Activated T-helper 1 cell treated with anti-CD3 and anti-CD28 coated beads, Interleukin-12 subunit alpha, Interleukin-12 subunit beta, Interleukin-2, Interleukin-4 antibody, amounts not matched to agents 30 ng/mL and 10 ng/mL and 1 ng/mL, durations not matched to agents 14 hours and 24 hours and 36 hours (primary cell): ENCODE measurements at regions of chr14 and their contacts with region 1.

Region 1: DNA sequence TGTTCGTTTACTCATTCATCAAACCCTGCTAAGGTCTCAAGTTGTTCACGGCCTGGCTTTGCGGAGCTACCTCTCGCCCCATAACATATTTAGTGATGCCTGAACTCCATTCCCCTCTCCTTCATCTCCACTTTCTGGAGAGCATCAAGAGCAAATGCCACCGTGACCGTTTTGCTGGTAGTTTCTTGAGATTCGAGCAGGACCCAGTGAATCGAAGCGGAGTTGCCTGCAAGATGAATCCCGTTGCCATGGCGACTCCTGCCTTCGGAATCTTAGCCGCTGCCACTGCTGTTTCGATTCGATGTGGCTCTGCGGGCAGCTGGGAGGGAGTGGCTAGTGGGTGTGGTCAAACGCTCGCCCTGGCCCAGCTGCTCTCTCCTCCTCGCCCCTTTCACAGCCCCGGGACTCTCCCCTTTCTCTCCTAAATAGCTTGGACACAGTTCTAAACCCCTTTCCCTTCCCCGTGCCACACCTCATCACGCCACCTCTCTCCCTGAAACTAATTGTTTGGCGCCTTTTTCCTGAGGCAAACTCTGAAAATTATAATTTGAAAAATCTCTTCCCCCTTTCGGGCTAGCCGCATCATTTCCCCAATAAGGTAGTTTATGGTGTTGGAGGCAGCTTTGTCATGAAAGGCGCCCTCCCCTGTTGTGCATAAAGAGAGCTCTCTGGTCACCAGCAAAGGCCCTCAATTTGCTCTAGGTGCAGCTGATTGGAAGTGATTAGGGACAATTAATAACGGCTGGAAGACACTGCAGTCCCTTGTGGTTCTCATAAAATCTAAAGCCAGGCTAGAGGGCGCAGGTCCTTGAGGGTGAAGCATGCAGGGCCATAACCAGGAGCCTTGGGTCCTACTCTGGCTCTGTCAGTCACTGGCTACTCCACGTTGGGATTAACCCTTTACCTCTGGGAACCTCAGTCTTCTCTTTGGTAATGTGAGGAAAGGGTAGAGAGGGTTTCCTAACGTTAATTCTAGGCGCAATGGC is 1.6 kb downstream of the DAAM1 start:
- DNase-seq: peak; percentile 73
- H3K4me3 Mint-ChIP-seq: peak overlapping the region; percentile 96
- H3K27ac Mint-ChIP-seq: peak overlapping the region; percentile 87
- H3K4me1 Mint-ChIP-seq: peaks cover 11% of the 10 kb centered on the region
- H3K27me3 Mint-ChIP-seq: peaks cover 17% of the 10 kb centered on the region

Region 2: GRCh38 chr14:59126710-59127432 is 63.2 kb before region 1 on chr14:
- intact Hi-C with region 1: loop called (anchors 5 kb)
- DNase-seq: peak; percentile 1
- H3K4me3 Mint-ChIP-seq: no peak overlapping the region
- H3K27ac Mint-ChIP-seq: no peak overlapping the region
- H3K4me1 Mint-ChIP-seq: no peaks in the 10 kb centered on the region
- H3K27me3 Mint-ChIP-seq: peaks cover 2% of the 10 kb centered on the region

Region 3: DNA sequence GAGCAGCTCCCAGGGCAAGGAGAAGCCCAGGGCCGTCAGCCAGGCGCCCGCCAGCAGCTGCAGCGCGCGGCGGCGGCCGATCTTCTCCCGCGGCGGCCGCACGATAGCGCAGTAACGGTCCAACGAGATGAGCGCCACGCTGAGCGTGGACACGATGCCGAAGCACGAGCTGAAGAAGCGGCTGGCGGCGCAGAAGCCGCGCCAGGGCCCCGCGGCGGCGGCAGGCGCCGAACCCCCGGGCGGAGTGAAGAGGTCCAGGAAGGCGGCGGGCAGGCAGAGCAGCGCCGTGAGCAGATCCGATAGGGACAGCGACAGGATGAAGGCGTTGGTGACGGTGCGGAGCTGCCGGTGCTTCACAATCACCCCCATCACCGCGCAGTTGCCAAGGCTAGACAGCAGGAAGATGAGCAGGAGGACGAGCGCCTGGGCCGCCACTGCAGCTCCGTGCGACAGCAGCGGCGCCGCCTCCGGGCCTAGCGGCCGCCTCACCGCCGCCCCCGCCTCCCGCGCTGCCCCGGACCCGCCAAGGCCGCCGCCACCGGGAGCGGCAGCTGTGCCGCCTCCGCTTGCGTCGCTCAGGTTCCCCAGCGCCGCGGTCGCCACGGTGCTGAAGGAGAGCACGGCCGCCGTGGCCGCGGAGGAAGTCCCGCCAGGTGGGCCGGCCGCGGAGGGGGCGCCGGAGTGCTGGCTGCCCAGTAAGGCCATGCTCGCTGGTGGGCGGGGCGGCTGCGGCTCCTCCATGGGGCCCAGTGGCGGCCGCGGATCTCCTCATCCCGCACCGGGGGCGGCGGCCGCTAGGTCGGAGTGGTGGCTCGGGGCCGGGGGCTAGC is 274.6 kb after region 1 on chr14:
- intact Hi-C with region 1: loop called (anchors 1 kb)
- DNase-seq: peak; percentile 43
- H3K4me3 Mint-ChIP-seq: peak overlapping the region; percentile 86
- H3K27ac Mint-ChIP-seq: peak overlapping the region; percentile 54
- H3K4me1 Mint-ChIP-seq: no peaks in the 10 kb centered on the region
- H3K27me3 Mint-ChIP-seq: peaks cover 10% of the 10 kb centered on the region

Region 4: GRCh38 chr14:59576332-59577294 is 386.5 kb after region 1 on chr14 and contains the start of gene CCDC175:
- intact Hi-C with region 1: loop called (anchors 1 kb)
- DNase-seq: peak; percentile 66
- H3K4me3 Mint-ChIP-seq: peak within 1 kb of the TSS; percentile 76
- H3K27ac Mint-ChIP-seq: no peak within 1 kb of the TSS
- H3K4me1 Mint-ChIP-seq: peaks cover 13% of the 10 kb centered on the region
- H3K27me3 Mint-ChIP-seq: peaks cover 27% of the 10 kb centered on the region
- total RNA-seq, gene CCDC175: not detected in 2 replicates